Tibial artery (tissue), 4 donors: ENCODE measurements at regions of chr4 and their contacts with region 1.

Region 1: DNA sequence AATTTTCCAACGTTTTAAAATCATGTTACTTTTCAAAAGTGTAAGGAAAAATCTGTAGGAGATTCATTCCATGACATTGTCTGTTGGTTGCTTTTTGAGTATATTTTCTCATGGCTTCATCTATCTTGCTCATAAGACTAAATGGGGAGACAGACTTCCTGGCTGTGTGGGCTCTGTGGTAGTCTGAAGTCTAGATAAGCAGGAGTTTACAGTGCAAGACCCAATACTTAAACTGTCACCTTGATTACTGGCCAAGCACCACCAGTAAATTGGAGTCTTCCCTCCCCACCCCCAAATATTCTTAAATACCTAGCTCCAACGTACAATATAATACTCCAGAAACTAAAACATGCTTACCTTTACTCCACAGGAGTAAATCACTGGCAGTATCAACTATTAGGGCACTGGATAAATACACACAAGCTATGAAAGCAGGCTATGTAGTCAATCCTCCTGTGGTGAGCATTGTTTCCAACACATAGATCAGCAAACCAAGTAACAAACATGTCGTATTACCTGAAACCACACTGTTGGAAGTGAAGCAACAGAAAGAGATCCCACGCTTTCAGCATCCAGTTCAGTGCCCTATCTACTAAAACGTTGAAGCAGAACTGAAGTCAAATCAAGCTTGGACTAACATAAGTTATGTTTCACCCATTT is 6.2 kb downstream of the HNRNPD start:
- DNase-seq: no peak
- H3K4me3 ChIP-seq: no peak overlapping the region
- H3K27ac ChIP-seq: no peak overlapping the region
- H3K4me1 ChIP-seq: peaks cover 5 to 99% (median 58%) of the 10 kb centered on the region in 4 donors
- H3K27me3 ChIP-seq: no peaks in the 10 kb centered on the region
- CTCF ChIP-seq: no peak

Region 2: DNA sequence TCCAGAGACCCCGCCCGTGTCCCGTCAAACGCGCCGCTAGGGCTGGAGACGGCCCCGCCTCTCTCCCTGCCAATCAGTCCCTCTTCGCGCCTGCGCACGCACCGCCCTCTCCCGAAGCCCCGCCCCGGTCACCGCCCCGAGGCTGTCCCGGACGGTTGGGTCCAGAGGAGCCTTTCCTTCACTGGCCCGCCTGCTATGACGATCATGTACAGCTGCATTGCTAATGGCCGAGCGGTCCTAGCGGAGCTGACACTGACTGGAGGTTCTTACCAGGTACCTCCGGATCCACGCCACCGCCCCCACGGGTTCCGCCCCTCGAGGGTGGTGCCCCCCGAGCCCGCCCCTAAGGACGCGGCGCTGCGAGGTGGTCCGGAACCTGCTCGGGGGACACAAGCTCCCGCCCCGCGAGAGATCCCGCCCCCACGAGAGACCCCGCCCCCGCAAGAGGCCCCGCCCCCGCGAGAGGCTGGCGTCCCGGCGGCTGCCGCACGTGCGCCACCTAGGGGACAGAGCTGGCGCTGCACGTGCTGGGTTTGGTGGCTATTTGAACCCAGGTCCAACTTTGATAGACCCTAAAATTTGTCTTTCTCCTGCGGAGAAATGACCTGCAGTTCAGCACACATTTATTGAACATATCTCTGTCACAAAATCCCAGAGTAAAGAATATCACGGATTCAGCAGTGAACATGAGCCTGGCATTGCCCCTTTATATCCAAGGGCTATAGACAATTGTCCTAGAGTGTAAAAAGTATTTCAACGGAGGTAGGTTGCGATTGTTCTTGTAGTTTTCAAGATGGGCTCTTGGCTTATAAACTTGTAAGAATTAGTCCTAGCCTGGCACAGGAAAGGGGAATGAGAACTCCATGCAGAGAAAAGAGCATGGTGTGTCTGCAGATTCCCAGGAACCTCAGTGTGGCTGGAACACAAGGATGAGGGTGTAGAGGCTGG is 82.4 kb before region 1 on chr4:
- intact Hi-C with region 1: loop called (anchors 5 kb)
- DNase-seq: peak; percentile 99 to 100
- H3K4me3 ChIP-seq: peak overlapping the region; percentile 41 to 51
- H3K27ac ChIP-seq: peak overlapping the region; percentile 42 to 46
- H3K4me1 ChIP-seq: peaks cover 0 to 12% (median 7%) of the 10 kb centered on the region in 4 donors
- H3K27me3 ChIP-seq: no peaks in the 10 kb centered on the region
- CTCF ChIP-seq: peak; percentile 71 to 98

Region 3: DNA sequence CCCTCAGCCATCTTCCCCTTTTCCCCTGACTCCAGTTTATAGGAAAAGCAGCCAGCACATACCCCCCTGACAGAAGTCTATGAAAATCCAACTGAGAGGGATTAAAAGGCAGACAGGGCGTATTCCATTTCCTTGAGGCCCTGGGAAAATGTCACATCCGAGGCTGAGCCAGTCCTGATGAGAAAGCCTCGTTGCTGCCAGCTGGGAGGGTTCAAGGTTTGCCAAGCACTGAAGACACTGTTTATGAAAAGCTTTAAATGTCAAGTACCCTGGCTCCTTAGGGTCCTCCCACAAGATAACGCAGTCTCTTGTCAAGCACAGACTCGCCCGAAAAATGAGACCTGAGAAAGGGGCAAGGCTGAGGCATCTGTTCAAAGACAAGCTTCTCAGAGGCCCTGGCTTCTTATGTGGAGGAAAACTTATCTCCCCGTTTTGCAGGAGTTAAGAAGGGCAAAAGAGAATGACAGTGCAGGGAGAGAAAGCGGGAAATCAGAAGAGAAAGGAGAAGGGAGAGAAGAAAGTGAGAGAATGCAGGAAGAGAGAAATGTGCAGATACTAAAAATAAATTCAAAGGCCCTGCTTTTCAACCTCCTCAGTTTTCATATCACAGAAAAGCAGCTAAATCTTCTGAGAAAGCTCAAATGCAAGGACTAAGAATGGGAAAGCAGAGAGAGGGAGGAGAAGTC is 386.3 kb after region 1 on chr4:
- intact Hi-C with region 1: no loop called
- DNase-seq: no peak
- H3K4me3 ChIP-seq: no peak overlapping the region
- H3K27ac ChIP-seq: peak overlapping the region; percentile 8 to 70
- H3K4me1 ChIP-seq: peaks cover 0 to 35% (median 17%) of the 10 kb centered on the region in 4 donors
- H3K27me3 ChIP-seq: no peaks in the 10 kb centered on the region
- CTCF ChIP-seq: no peak